ENCODE measurements at regions of chr1 and their contacts with region 1.

Region 1: DNA sequence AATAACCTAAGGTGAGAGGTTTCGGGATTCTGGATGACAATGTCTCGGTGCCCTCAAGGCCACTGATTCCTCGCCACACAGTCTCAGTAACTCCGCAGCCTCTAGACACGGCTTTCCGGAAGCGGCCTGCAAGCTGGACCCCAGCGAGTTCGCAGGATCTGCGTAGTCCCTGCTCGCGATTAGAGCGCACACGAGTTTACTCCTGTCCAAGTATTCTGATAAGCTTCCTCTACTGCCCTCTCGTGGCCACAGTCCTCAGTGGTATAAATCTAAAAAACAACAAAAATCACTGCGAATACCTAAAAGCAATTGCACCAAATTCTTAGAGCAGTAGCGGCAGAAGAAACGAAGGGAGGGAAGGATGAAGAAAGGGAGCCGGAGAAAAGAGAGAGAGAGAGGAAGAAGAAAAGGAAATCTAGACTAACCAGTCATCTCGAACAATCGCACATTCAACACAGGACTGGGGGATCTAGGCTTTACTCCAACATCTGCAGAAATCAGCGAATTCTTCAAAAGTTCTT is 1.1 kb upstream of the PLXNA2 start:
- DNase-seq: peak; percentile 95
- H3K4me3 ChIP-seq: peak overlapping the region; percentile 89
- H3K27ac ChIP-seq: peak overlapping the region; percentile 92
- H3K4me1 ChIP-seq: peaks cover 6% of the 10 kb centered on the region
- H3K27me3 ChIP-seq: no peaks in the 10 kb centered on the region
- CTCF ChIP-seq: peak; percentile 69

Region 2: GRCh38 chr1:207885129-207886032 is 359.9 kb before region 1 on chr1:
- intact Hi-C with region 1: loop called (anchors 10 kb)
- DNase-seq: peak; percentile 86
- H3K4me3 ChIP-seq: no peak overlapping the region
- H3K27ac ChIP-seq: no peak overlapping the region
- H3K4me1 ChIP-seq: no peaks in the 10 kb centered on the region
- H3K27me3 ChIP-seq: no peaks in the 10 kb centered on the region
- CTCF ChIP-seq: peak; percentile 94

Region 3: GRCh38 chr1:208025031-208025430 is 220.2 kb before region 1 on chr1:
- intact Hi-C with region 1: loop called (anchors 2 kb)
- DNase-seq: no peak
- H3K4me3 ChIP-seq: no peak overlapping the region
- H3K27ac ChIP-seq: no peak overlapping the region
- H3K4me1 ChIP-seq: peaks cover 7% of the 10 kb centered on the region
- H3K27me3 ChIP-seq: no peaks in the 10 kb centered on the region
- CTCF ChIP-seq: no peak

Region 4: GRCh38 chr1:208093754-208094719 is 151.2 kb before region 1 on chr1:
- intact Hi-C with region 1: loop called (anchors 10 kb)
- DNase-seq: peak; percentile 74
- H3K4me3 ChIP-seq: no peak overlapping the region
- H3K27ac ChIP-seq: no peak overlapping the region
- H3K4me1 ChIP-seq: no peaks in the 10 kb centered on the region
- H3K27me3 ChIP-seq: no peaks in the 10 kb centered on the region
- CTCF ChIP-seq: peak; percentile 66

Region 5: DNA sequence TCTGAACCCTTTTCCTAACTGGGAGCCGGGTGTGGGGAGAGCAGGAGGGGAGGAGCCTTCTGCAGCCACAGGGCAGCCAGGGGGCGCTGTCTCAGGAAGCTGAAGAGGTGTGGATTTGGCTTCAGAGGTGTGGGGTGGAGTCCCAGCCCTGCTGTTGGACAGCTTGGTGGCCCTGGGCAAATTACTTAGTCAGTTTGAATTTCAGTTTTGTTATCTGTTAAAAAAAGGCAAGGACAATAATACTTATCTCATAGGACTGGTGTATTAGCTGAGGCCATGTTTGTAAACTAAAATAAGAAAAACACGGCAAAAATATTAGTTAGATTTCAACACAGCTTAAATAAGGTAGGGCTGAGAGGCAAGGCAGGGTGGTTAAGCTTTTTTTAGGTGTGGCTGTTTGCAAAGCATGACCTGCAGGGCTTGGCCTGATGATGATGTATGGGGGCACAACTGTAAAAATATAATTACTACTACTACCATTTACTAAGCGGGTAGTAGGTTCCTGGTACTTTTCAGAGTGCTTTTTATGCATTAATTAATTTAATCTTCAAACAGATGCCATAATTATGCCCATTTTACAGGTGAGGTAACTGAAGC is 112.9 kb before region 1 on chr1:
- intact Hi-C with region 1: loop called (anchors 2 kb)
- DNase-seq: peak; percentile 95
- H3K4me3 ChIP-seq: no peak overlapping the region
- H3K27ac ChIP-seq: peak overlapping the region; percentile 5
- H3K4me1 ChIP-seq: no peaks in the 10 kb centered on the region
- H3K27me3 ChIP-seq: no peaks in the 10 kb centered on the region
- CTCF ChIP-seq: peak; percentile 83

Measured in colonic mucosa (tissue), 4 donors.